ENCODE measurements at regions of chr4 and their contacts with region 1.

Region 1: GRCh38 chr4:138035781-138036258 is 206.3 kb downstream of the SLC7A11 start:
- DNase-seq: no peak
- H3K4me3 ChIP-seq: no peak overlapping the region
- H3K27ac ChIP-seq: no peak overlapping the region
- H3K4me1 ChIP-seq: peaks cover 0 to 8% (median 0%) of the 10 kb centered on the region in 4 donors
- H3K27me3 ChIP-seq: no peaks in the 10 kb centered on the region
- CTCF ChIP-seq: peak; percentile 55 to 69

Region 2: DNA sequence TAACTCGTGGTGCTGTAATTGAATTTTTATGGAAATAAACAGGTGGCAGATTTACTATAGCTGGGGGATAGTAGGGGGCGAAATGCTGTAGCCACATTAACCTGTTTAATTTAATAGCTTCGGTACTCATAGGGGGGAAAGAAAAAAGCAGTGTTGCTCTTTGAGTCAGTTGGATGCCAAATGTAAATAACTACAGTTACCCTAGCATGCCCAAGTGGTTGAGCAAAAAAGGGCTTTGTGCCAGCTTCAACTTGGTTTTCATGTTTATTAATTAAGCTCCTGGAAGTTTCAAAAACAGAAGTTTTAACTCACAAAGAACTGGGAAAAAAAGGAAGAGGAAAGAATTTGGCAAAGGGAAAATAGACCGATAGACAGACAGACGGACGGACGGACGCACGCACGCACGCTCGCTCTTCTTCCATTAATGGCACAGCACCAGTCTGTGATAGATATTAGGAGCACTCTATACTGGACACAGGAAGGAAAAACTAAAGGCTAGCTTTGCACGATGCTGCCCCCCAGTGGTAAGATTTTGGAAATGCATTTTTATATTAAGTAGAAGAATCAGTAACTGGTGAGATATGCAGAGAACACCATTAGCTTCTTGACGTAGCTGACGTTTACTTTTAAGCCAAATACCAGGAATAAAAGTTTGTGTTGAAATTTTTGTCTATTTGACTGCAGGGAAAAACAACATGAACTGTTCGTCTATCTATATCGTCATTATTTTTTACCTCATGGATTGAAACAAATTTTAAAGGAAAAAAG is 54.5 kb after region 1 on chr4:
- intact Hi-C with region 1: loop called (anchors 5 kb)
- DNase-seq: no peak
- H3K4me3 ChIP-seq: peak overlapping the region; percentile 18 to 40
- H3K27ac ChIP-seq: peak overlapping the region in 1 of 2 donors; percentile 22
- H3K4me1 ChIP-seq: peaks cover 0 to 42% (median 20%) of the 10 kb centered on the region in 4 donors
- H3K27me3 ChIP-seq: no peaks in the 10 kb centered on the region
- CTCF ChIP-seq: peak; percentile 72 to 77

Region 3: DNA sequence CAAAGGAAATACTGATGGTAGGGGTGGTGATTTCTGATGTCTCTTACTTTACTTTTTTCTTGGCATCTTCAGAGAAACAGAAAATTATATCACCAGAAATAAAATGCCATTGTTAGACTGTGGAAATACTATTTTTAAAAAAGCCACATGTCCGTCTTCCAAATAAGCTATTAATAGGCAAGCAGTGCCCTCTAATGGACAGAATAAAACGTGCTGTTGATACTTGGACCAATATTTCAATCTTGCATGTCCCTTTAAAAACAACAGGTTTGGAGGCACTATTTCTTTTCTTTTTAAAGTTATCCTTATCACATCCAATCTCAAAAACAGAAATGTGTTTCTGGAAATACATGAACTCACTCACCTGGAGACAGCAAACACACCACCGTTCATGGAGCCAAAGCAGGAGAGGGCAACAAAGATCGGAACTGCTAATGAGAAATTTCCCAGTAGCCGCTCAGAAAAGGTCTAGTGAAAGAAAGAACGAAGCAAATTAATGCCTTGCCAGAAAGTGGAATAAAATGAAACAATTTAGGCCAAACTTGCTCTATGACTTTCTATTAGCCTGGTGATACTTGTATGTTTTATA is 147.1 kb after region 1 on chr4:
- intact Hi-C with region 1: loop called (anchors 5 kb)
- DNase-seq: no peak
- H3K4me3 ChIP-seq: no peak overlapping the region
- H3K27ac ChIP-seq: no peak overlapping the region
- H3K4me1 ChIP-seq: peaks cover 0 to 19% (median 0%) of the 10 kb centered on the region in 4 donors
- H3K27me3 ChIP-seq: no peaks in the 10 kb centered on the region
- CTCF ChIP-seq: peak; percentile 70 to 71

Region 4: DNA sequence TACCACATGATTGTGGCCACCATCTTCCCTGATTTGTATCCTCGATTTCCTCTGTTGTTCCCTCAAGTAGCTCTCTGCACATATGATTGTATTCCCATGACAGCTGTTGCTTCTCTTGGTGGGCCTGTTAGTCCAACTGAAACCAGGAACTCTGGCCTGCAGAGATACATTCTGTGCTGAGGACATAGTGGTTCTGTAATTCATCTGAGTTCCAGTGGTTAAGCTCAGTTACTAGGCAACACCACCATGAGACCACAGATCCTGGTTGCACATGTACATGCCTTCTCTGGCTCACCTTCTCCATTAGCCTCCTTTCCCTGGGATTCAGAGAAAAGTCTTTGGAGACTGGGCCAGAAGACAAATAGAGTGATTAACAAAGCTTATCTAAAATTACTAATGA is 378.4 kb after region 1 on chr4:
- intact Hi-C with region 1: no loop called
- DNase-seq: no peak
- H3K4me3 ChIP-seq: no peak overlapping the region
- H3K27ac ChIP-seq: no peak overlapping the region
- H3K4me1 ChIP-seq: no peaks in the 10 kb centered on the region
- H3K27me3 ChIP-seq: no peaks in the 10 kb centered on the region
- CTCF ChIP-seq: no peak

Region 5: DNA sequence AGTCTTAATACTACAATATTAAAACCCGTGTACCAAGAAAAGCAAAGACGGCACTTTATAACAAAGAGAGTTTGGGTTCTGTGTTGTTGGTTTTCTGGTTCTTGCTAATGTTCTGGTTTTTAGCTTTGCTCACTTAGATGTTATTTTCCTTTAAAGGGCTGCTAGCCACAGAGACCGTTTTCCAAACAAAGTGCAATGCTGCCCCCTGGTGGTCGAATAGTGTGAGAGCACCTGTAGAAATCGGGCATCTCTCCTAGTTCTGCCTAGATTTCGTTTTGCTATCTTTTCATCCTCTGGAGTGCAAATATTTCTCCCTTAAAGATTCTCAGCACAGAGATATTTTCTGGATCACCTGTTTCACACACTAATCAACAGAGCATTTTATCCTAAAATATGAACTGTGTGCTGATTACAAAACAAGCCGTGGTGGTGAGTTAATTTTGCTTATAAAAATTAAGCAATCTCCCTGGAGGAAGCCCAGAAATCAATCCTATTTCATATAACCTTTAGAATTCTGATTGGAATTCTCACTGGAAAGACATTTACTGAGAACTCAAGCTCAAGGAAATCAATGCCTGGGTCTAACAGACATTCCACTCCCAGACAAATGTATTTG is 645.3 kb after region 1 on chr4:
- intact Hi-C with region 1: loop called (anchors 2 kb)
- DNase-seq: peak; percentile 68 to 88
- H3K4me3 ChIP-seq: no peak overlapping the region
- H3K27ac ChIP-seq: no peak overlapping the region
- H3K4me1 ChIP-seq: peaks cover 0 to 29% (median 10%) of the 10 kb centered on the region in 4 donors
- H3K27me3 ChIP-seq: no peaks in the 10 kb centered on the region
- CTCF ChIP-seq: peak; percentile 85 to 88